ENCODE measurements at regions of chr1 and their contacts with region 1.

Region 1: GRCh38 chr1:245096311-245097066 is 58.3 kb upstream of the KIF26B start:
- DNase-seq: no peak
- H3K4me3 ChIP-seq: no peak overlapping the region
- H3K4me3 Mint-ChIP-seq: no peak overlapping the region
- H3K27ac Mint-ChIP-seq: no peak overlapping the region
- H3K4me1 ChIP-seq: peaks cover 5% of the 10 kb centered on the region; the same call in 1 of the 2 replicates
- H3K4me1 Mint-ChIP-seq: no peaks in the 10 kb centered on the region
- H3K27me3 ChIP-seq: no peaks in the 10 kb centered on the region
- H3K27me3 Mint-ChIP-seq: no peaks in the 10 kb centered on the region
- CTCF ChIP-seq: no peak

Region 2: GRCh38 chr1:245067257-245067656 is 29.2 kb before region 1 on chr1:
- CTCF ChIA-PET with region 1: no interaction called
- POLR2A ChIA-PET with region 1: no interaction called
- intact Hi-C with region 1: no loop called
- DNase-seq: no peak
- H3K4me3 ChIP-seq: no peak overlapping the region
- H3K4me3 Mint-ChIP-seq: no peak overlapping the region
- H3K27ac Mint-ChIP-seq: no peak overlapping the region
- H3K4me1 ChIP-seq: no peaks in the 10 kb centered on the region
- H3K4me1 Mint-ChIP-seq: no peaks in the 10 kb centered on the region
- H3K27me3 ChIP-seq: no peaks in the 10 kb centered on the region
- H3K27me3 Mint-ChIP-seq: no peaks in the 10 kb centered on the region
- CTCF ChIP-seq: no peak

Region 3: GRCh38 chr1:245129319-245130240 is 33.1 kb after region 1 on chr1:
- CTCF ChIA-PET with region 1: no interaction called
- POLR2A ChIA-PET with region 1: no interaction called
- intact Hi-C with region 1: loop called (anchors 1 kb)
- DNase-seq: no peak
- H3K4me3 ChIP-seq: no peak overlapping the region
- H3K4me3 Mint-ChIP-seq: no peak overlapping the region
- H3K27ac Mint-ChIP-seq: no peak overlapping the region
- H3K4me1 ChIP-seq: no peaks in the 10 kb centered on the region
- H3K4me1 Mint-ChIP-seq: no peaks in the 10 kb centered on the region
- H3K27me3 ChIP-seq: no peaks in the 10 kb centered on the region
- H3K27me3 Mint-ChIP-seq: no peaks in the 10 kb centered on the region
- CTCF ChIP-seq: no peak

Measured in Caco-2 (cell line).